Aorta (tissue), 5 donors: ENCODE measurements at regions of chr11 and their contacts with region 1.

Region 1: GRCh38 chr11:27052668-27053067 is 12.1 kb downstream of the BBOX1 start:
- DNase-seq: no peak
- ATAC-seq: no peak
- H3K4me3 ChIP-seq: no peak overlapping the region
- H3K27ac ChIP-seq: no peak overlapping the region
- H3K4me1 ChIP-seq: peaks cover 0 to 5% of the 10 kb centered on the region in 2 donors
- H3K27me3 ChIP-seq: no peaks in the 10 kb centered on the region

Region 2: GRCh38 chr11:26930518-26931247 is 122.0 kb before region 1 on chr11:
- intact Hi-C with region 1: no loop called
- DNase-seq: no peak
- ATAC-seq: no peak
- H3K4me3 ChIP-seq: no peak overlapping the region
- H3K27ac ChIP-seq: no peak overlapping the region
- H3K4me1 ChIP-seq: peaks cover 0 to 2% of the 10 kb centered on the region in 2 donors
- H3K27me3 ChIP-seq: no peaks in the 10 kb centered on the region

Region 3: DNA sequence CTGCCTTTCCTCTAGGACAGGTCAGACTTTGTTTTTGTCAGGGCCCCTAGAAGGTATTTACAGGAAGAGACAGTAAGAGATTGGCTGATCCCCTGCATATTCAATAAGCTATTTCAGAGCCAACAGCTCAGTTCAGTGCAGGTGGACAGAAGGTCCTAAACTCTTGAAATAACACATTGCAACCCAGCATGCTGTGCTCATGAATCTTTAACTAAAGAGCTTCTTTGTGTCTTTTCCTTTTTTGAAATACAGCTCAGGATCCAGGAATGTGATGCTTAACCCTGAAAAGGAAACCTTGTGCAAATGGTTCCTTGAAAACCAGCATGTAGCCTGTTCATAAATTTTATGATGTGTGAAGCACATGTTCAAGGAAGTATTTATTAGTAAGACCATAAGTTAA is 31.9 kb after region 1 on chr11:
- intact Hi-C with region 1: loop called in 1 of 2 experiments (anchors 1 kb)
- DNase-seq: no peak
- ATAC-seq: no peak
- H3K4me3 ChIP-seq: no peak overlapping the region
- H3K27ac ChIP-seq: no peak overlapping the region
- H3K4me1 ChIP-seq: no peaks in the 10 kb centered on the region
- H3K27me3 ChIP-seq: no peaks in the 10 kb centered on the region